A549 (cell line): ENCODE measurements at regions of chr17 and their contacts with region 1.

Region 1: GRCh38 chr17:37791447-37792399 is 46.9 kb upstream of the HNF1B start:
- DNase-seq: peak; percentile 35 to 80
- ATAC-seq: peak in 1 of 2 experiments; percentile 67; a peak in 3 of 6 replicates
- H3K4me3 ChIP-seq: no peak overlapping the region
- H3K27ac ChIP-seq: peak overlapping the region in 1 of 2 experiments; percentile 21; a peak in 2 of 6 replicates
- H3K4me1 ChIP-seq: peaks cover 29% of the 10 kb centered on the region
- CTCF ChIP-seq: peak; percentile 83
- EP300 ChIP-seq: no peak
- POLR2A ChIP-seq: no peak
- RAD21 ChIP-seq: peak; percentile 72 to 79

Region 2: GRCh38 chr17:37802712-37803416 is 11.1 kb after region 1 on chr17:
- CTCF ChIA-PET with region 1: interaction called, 23 read pairs
- POLR2A ChIA-PET with region 1: no interaction called
- DNase-seq: no peak
- ATAC-seq: peak in 1 of 2 experiments; percentile 22; a peak in 2 of 6 replicates
- H3K4me3 ChIP-seq: no peak overlapping the region
- H3K27ac ChIP-seq: no peak overlapping the region
- H3K4me1 ChIP-seq: no peaks in the 10 kb centered on the region
- CTCF ChIP-seq: no peak
- EP300 ChIP-seq: no peak
- POLR2A ChIP-seq: no peak
- RAD21 ChIP-seq: no peak